Dorsolateral prefrontal cortex (tissue), 120 donors: ENCODE measurements at regions of chr3 and their contacts with region 1.

Region 1: DNA sequence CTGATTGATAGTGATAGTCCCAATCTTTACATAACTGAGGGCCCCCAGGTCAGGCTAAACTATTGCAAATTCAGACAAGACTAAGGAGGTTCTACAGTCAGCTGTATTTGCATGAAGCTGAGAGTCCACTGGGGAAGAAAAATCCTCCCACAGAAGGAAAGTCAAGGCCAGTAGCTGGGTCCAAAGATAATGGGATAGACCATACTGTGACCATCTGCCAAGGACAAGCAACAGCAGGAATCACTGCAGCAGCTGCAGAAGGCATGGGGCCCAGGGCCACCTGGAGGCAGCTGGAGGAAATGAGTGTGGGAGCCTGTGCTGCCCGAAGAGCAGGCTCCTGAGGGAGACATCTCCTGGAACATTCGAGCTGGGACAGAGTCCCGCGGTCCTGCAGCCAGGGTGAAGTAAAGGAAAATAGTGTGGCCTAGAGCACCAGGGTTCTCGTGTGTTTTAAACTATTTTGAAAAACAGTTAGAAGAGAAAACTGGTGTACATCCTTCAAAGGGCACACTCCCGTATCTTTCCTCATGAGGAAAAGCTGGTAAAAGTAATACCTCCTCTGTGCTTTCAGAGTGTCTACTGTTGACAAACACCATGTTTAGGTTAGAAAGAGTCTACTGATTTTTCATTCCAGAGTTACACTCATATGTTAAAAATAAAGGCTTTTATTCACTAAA is 13.2 kb upstream of the TMEM212 start:
- DNase-seq: peak in 9 of 10 donors; percentile 54 to 75 (median 60)
- H3K4me3 ChIP-seq: peak overlapping the region in 1 of 59 donors; percentile 13
- H3K27ac ChIP-seq: peak overlapping the region in 57 of 59 donors; percentile 19 to 87 (median 73)
- H3K27me3 ChIP-seq: no peaks in the 10 kb centered on the region
- CTCF ChIP-seq: peak in 55 of 56 donors; percentile 15 to 85 (median 61)

Region 2: GRCh38 chr3:171172070-171172469 is 657.9 kb before region 1 on chr3:
- intact Hi-C with region 1: loop called in 1 of 2 experiments (anchors 10 kb)
- DNase-seq: no peak
- H3K4me3 ChIP-seq: no peak overlapping the region
- H3K27ac ChIP-seq: peak overlapping the region in 15 of 59 donors; percentile 9 to 96 (median 91)
- H3K27me3 ChIP-seq: no peaks in the 10 kb centered on the region
- CTCF ChIP-seq: peak in 14 of 56 donors; percentile 6 to 34 (median 19)

Region 3: DNA sequence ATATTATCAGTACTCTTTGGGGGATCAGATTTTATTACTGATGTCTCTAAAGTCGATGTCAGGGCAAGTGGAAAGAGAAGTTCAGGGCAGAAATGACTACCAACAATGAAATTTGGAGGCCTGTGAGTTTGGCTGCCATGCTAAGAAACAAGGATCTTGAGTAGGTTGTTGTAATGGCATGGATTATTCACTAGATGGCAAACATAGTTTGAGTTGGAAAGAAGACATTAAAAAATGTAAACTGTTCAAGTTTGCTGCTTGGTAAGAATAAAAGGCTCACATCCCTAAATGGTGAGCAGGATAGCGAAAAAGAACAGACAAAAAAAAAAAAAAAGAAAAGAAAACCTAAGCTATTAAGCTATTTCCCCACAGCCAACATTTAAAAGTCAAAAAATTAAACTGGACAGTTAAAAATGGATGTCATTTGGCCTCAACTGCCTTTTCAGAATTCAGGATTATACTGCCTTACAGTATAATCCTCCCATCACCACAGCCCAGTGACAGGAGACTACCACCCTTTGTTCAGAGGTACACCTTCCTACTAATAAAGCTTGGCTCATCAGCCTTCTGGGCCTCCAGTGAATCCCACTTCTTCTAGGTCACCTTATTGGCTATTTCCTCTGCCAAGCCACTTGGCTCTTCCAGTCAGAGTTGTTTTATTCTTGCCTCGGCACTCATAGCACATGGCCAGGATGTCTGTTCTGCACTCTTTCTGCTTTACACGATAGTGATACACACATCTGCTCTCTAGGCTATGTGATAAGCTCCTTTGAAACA is 183.4 kb before region 1 on chr3:
- intact Hi-C with region 1: loop called (anchors 5 kb)
- DNase-seq: no peak
- H3K4me3 ChIP-seq: no peak overlapping the region
- H3K27ac ChIP-seq: peak overlapping the region in 30 of 59 donors; percentile 1 to 61 (median 25)
- H3K27me3 ChIP-seq: no peaks in the 10 kb centered on the region
- CTCF ChIP-seq: peak; percentile 34 to 83 (median 70)

Region 4: DNA sequence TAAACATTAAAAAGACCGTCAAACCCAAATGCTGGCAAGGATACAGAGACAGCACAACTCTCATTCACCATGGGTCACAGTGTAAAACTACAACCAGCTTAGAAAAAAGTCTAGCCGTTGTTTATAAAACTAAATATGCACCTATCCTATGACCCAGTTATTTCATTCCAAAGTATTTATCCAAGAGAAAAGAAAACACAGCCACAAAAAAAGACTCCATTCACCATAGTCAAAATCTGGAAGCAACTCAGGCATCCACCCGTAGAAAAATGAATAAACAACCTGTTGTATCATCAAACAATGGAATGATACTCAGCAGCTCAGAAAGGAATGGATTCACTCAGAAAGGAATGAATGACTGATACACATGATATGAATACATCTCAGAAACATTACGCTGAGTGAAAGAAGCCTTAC is 48.3 kb before region 1 on chr3:
- intact Hi-C with region 1: loop called (anchors 2 to 5 kb)
- DNase-seq: no peak
- H3K4me3 ChIP-seq: peak overlapping the region in 17 of 59 donors; percentile 0 to 46 (median 17)
- H3K27ac ChIP-seq: peak overlapping the region in 58 of 59 donors; percentile 34 to 100 (median 88)
- H3K27me3 ChIP-seq: no peaks in the 10 kb centered on the region
- CTCF ChIP-seq: peak in 2 of 56 donors; percentile 8 to 14

Region 5: DNA sequence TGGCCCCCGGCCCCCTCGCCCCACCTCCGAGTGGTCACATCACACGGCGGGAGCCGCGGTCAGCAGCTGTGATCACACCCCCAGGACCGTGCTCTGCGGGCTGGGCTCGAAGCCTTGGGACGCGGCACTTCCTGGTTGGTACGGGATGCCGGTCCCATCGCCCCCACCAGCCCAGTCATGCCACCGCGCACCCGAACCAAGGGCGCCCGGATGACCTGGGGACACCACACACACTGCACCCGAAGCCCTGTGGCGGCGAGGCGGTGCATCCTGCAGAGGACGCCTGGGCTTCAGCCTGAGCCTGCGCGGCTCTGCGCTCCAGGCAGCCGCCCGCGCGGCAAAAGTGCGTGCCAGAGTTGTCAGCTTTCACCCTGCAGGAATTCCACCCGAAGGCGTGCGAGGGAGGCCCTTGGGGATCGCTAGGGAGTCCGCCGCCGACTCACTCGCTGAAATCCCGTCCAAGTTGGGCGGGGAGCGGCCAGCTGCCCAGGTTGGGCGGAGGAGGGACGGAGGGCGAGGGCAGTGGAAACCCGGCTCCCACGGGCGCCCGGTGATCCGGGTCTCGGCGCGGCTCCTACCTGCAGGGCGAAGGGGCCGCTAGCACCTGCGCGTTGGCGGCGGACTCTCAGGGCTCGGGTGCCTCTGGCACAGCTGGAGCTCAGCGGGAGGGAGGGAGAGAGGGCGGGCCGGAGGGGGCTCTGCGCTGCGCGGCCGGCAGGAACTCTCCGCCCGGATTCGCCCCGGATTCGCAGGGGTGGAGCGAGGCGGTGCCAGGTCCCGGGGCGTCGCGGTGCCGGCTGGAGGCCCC is 20.0 kb before region 1 on chr3 and contains the start of gene PLD1:
- intact Hi-C with region 1: loop called in 1 of 2 experiments (anchors 2 kb)
- DNase-seq: peak; percentile 11 to 87 (median 74)
- H3K4me3 ChIP-seq: peak within 1 kb of the TSS; percentile 59 to 95 (median 77)
- H3K27ac ChIP-seq: peak within 1 kb of the TSS; percentile 84 to 99 (median 97)
- H3K27me3 ChIP-seq: no peaks in the 10 kb centered on the region
- CTCF ChIP-seq: peak in 18 of 56 donors; percentile 3 to 41 (median 15)
- total RNA-seq, gene PLD1: 16.2 to 167 (median 39.0) TPM

Region 6: DNA sequence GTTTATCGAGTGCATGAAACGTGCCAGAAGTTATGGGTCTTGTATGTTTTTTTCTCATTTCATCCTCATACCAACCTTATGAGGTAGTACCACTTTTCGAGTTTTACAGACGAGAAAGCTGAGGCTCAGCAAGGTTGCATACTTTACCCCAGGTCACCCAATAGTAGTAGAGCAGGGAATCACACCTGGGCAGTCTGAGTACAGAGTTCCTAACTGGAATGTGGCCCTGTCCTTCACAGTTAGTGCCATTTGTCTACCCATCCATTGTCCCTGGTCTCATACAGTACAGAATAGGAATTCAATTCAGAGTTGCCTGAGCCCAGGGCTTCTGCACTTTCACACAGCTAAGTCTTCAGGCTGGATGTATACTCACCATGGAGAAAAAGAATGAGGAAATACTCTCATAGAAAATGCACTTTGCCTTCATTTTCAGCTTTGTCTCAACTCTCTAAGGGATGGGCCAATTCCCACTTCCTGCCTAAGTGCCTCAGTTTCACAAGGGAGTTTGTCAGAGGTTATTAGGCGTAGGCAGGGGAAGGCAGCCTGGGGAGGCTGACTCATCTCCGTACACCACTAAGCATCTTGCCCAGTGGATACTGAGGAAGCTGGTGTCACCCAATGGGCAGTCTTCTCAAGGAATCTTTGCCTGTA is 106.3 kb after region 1 on chr3:
- intact Hi-C with region 1: no loop called
- DNase-seq: no peak
- H3K4me3 ChIP-seq: no peak overlapping the region
- H3K27ac ChIP-seq: no peak overlapping the region
- H3K27me3 ChIP-seq: no peaks in the 10 kb centered on the region
- CTCF ChIP-seq: no peak